ENCODE measurements at regions of chr5 and their contacts with region 1.

Region 1: DNA sequence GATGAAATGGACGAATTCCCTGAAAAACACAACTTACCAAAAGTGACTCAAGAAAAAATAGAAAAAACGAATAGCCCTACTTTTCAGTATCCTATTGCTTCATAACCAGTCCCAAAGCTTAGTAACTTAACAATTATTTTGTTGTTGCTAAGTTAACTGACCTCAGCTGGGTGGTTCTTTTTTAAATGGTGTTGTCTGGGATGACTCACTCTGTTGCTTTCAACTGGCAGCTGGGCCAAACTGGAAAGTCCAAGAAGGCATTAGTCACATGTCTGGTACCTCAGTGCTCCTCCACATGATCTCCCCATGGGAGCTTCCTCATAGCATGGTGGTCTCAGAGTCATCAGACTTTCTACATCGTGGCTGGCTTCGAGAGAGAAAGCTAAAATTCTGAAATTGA is 47.8 kb upstream of the ADAMTS2 start:
- DNase-seq: no peak
- H3K4me3 ChIP-seq: no peak overlapping the region
- H3K27ac ChIP-seq: no peak overlapping the region
- H3K4me1 ChIP-seq: no peaks in the 10 kb centered on the region
- H3K27me3 ChIP-seq: no peaks in the 10 kb centered on the region
- CTCF ChIP-seq: no peak
- EP300 ChIP-seq: no peak
- POLR2A ChIP-seq: no peak

Region 2: GRCh38 chr5:179438011-179438441 is 44.9 kb after region 1 on chr5:
- in situ Hi-C with region 1: no loop called
- intact Hi-C with region 1: loop called (anchors 2 kb)
- DNase-seq: no peak
- H3K4me3 ChIP-seq: no peak overlapping the region
- H3K27ac ChIP-seq: no peak overlapping the region
- H3K4me1 ChIP-seq: no peaks in the 10 kb centered on the region
- H3K27me3 ChIP-seq: peaks cover 2% of the 10 kb centered on the region
- CTCF ChIP-seq: no peak
- EP300 ChIP-seq: no peak
- POLR2A ChIP-seq: no peak